Sciatic nerve (tissue), 2 donors: ENCODE measurements at regions of chr9 and their contacts with region 1.

Region 1: GRCh38 chr9:34546834-34547827 is 24.3 kb upstream of the ENHO start:
- DNase-seq: peak; percentile 85
- ATAC-seq: peak; percentile 76

Region 2: GRCh38 chr9:34475097-34475496 is 72.0 kb before region 1 on chr9:
- intact Hi-C with region 1: no loop called
- DNase-seq: no peak
- ATAC-seq: no peak

Region 3: GRCh38 chr9:34493972-34494535 is 53.1 kb before region 1 on chr9:
- intact Hi-C with region 1: loop called (anchors 10 kb)
- DNase-seq: peak; percentile 83
- ATAC-seq: peak; percentile 67

Region 4: GRCh38 chr9:34591248-34591916 is 44.3 kb after region 1 on chr9:
- intact Hi-C with region 1: loop called (anchors 5 kb)
- DNase-seq: peak; percentile 95
- ATAC-seq: peak; percentile 88